ENCODE measurements at regions of chr7 and their contacts with region 1.

Region 1: GRCh38 chr7:74449809-74450397 is 3.8 kb upstream of the GTF2IRD1 start:
- DNase-seq: peak in 2 of 5 donors; percentile 45 to 54
- H3K4me3 ChIP-seq: no peak overlapping the region
- H3K27ac ChIP-seq: no peak overlapping the region
- H3K4me1 ChIP-seq: peaks cover 0 to 9% (median 0%) of the 10 kb centered on the region in 3 donors
- H3K27me3 ChIP-seq: no peaks in the 10 kb centered on the region
- CTCF ChIP-seq: peak; percentile 76

Region 2: DNA sequence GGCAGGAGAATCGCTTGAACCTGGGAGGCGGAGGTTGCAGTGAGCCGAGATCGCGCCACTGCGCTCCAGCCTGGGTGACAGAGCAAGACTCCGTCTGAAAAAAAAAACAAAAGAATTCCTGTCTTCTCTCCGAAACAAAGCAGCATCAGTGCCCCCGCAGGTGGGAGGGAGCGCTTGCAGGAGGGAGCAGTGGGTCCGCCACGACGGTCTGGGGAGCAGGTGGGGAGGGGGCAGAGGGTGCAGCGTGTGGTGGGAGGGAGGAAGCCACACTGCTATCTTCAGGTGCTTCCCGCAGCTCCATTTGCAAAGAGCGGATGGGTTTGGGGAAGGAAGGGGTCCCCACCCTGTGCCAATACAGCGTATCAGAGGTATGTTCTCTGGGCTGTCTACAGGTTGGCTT is 334.6 kb before region 1 on chr7:
- intact Hi-C with region 1: no loop called
- DNase-seq: no peak
- H3K4me3 ChIP-seq: no peak overlapping the region
- H3K27ac ChIP-seq: no peak overlapping the region
- H3K4me1 ChIP-seq: no peaks in the 10 kb centered on the region
- H3K27me3 ChIP-seq: no peaks in the 10 kb centered on the region
- CTCF ChIP-seq: no peak

Region 3: DNA sequence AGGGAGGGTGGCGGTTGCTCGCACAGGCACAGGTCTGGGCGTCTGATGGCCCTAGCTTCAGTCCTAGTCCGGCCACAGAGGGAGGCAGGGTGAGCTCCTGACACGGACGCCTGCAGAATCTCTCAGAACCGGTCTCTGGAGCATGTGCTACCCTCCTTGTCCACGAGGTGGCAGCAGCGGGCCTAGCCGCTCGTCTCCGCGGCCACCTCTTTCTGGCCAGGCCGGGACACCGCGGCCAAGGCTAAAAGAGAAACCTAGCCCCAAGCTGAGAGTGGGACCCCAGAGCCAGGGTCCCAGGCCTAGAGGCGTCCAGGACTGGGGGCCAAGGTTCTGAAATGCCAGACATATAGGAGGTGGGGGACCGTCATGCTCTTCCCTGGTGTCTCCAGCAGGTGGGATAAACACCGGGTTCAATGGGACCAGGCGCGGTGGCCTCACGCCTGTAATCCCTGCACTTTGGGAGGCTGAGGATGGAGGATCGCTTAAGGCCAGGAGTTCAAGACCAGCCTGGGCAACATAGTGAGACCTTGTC is 243.2 kb before region 1 on chr7:
- intact Hi-C with region 1: no loop called
- DNase-seq: peak; percentile 81 to 94 (median 86)
- H3K4me3 ChIP-seq: peak overlapping the region in 1 of 3 donors; percentile 41
- H3K27ac ChIP-seq: no peak overlapping the region
- H3K4me1 ChIP-seq: peaks cover 0 to 2% (median 0%) of the 10 kb centered on the region in 3 donors
- H3K27me3 ChIP-seq: no peaks in the 10 kb centered on the region
- CTCF ChIP-seq: peak; percentile 95

Region 4: DNA sequence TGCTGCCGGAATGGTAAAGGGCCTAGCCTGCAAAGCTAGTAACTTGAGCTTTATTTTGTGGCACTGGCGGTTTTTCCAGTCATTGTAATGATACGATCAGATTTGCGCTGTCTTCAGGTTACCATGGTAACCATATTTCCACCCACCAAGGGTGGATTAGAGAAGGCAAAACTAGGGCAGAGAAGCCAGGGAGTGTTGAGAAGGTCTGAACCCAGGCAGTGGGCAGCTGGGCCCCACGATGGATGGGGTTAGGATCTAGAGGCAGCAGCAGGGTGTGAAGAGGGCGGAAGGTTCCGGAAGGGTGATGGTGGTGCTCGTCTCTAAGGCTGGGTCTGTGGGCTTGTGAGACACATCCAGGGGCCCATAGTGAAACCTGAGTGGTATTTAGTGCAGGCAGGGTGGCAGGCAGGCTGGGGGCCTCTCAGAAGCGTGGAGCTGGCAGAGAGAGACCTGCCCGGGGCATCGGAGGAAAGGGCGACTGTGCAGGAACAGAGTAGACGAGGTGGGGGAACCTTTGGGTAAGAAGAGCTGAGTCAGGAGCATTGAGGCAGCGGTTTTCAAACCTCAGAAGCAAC is 119.7 kb after region 1 on chr7:
- intact Hi-C with region 1: loop called (anchors 10 kb)
- DNase-seq: peak in 2 of 5 donors; percentile 43 to 51
- H3K4me3 ChIP-seq: no peak overlapping the region
- H3K27ac ChIP-seq: no peak overlapping the region
- H3K4me1 ChIP-seq: no peaks in the 10 kb centered on the region
- H3K27me3 ChIP-seq: no peaks in the 10 kb centered on the region
- CTCF ChIP-seq: no peak